ENCODE measurements at regions of chr6 and their contacts with region 1.

Region 1: DNA sequence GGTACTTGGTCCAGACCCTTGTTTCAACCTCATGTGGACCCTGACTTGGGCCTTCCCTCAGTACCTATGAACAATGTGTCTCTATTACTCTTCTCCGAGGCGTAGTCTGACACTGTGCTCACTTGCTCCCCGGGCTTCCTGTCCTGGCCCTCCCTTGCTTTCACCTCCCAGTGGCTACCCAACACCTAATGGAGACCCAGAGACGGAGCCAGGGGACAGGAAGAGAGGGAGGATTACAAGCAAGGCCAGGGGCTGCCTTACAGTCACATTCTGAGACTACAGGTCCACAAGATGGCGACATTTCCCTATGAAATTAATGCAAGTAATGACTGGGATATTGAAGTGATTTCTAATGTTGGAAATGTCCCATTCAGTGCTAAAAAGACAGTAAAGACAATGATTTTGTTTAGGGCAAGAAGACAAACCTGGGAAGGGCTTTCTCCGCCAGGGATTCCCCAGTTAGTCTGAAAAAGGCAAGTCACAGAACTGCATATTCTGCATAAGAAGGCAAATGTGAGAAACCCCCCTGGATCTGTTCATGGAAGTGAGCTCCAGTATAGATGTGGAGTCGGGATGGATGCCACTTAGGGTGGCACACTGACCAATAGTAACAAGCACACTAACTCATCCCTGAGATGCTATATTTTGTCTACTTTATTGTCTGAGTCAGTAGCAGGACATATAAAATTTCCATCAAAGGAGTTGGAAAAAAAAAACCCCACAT is 44.0 kb upstream of the ZBTB24 start:
- DNase-seq: peak; percentile 24
- CTCF ChIP-seq: peak; percentile 71

Region 2: DNA sequence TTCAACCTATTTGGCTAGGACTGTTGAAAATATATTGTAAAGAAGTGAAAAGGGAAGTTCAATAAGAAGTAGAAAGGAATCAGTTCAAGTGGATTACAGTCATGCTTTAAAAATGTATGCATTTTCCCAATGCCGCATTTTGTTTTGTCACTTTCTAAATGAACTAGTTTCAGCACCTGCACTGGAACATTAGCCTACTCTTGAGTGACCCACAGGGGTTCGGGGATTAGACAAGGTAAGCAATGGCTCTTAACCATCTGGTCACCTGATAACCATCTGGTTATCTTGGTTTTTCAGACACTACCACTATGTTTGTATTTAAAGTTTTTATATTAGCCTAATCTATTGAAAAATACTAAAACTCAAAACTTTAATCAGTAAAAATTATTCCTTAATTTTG is 242.4 kb before region 1 on chr6:
- in situ Hi-C with region 1: no loop called
- DNase-seq: no peak
- CTCF ChIP-seq: no peak

Region 3: GRCh38 chr6:110039364-110039980 is 512.4 kb after region 1 on chr6:
- in situ Hi-C with region 1: loop called (anchors 25 kb)
- DNase-seq: peak; percentile 80
- CTCF ChIP-seq: peak; percentile 81

Measured in GM13976 (cell line).